ENCODE measurements at regions of chr2 and their contacts with region 1.

Region 1: DNA sequence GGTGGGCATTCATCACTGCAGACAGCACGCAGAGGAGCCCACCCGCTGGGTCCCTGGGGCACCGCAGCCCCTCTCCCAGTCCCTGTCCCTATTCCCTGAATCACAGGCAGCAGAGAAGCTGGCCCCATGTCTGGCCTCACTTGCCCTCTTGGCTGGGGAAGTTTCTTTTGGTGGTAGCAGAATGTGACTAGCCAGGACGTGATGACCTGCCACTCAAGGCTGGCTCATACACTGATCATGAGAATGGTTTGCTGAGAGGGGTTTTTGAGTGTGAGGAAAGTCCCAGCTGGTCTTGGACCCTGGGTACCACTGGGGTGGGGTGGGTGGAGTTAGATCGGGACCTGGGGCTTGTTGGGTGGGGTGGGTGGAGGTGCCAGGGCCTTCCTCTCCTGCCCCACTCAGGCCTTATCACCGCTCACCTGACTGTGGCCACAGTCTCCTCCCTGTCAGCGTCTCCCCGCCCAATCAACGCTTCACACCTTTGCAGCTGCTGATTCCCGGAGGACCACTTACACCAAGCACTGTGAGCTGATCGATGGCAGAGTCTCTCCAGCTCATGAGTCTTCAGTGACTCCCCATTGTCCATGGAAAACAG is 28.9 kb upstream of the FOSL2 start:
- DNase-seq: no peak
- ATAC-seq: no peak
- H3K4me3 ChIP-seq: no peak overlapping the region
- H3K27ac ChIP-seq: no peak overlapping the region
- H3K4me1 ChIP-seq: peaks cover 7% of the 10 kb centered on the region; the same call in 1 of the 2 replicates
- H3K27me3 ChIP-seq: no peaks in the 10 kb centered on the region; the same call in 1 of the 2 replicates
- CTCF ChIP-seq: no peak
- POLR2A ChIP-seq: no peak
- RAD21 ChIP-seq: no peak

Region 2: DNA sequence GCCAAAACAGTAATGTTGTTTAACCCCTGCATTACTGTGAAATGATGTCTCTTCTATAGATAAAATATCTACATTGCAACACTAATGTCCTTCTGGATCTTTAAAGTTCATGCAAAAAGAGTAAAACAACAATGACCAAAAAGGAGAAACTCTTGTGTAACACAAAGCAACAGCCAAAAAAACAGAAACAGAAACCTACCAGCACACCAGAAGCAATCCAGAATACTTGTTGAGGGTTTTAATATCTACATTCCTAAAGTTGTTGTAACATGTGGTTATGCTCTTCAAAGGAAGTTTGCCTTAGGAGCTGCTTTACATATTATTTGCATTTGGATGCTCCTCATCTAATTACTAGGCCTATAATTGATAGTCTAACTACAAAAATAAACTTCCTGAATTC is 316.1 kb before region 1 on chr2:
- CTCF ChIA-PET with region 1: no interaction called
- POLR2A ChIA-PET with region 1: interaction called, 10 read pairs
- dilution Hi-C with region 1: no loop called
- in situ Hi-C with region 1: no loop called
- intact Hi-C with region 1: no loop called
- DNase-seq: peak; percentile 81
- ATAC-seq: peak; percentile 63
- H3K4me3 ChIP-seq: no peak overlapping the region
- H3K27ac ChIP-seq: peak overlapping the region; percentile 42; the same call in 1 of the 2 replicates
- H3K4me1 ChIP-seq: peaks cover 10% of the 10 kb centered on the region
- H3K27me3 ChIP-seq: no peaks in the 10 kb centered on the region
- CTCF ChIP-seq: no peak
- POLR2A ChIP-seq: no peak
- RAD21 ChIP-seq: no peak

Region 3: GRCh38 chr2:28346587-28346986 is 17.2 kb before region 1 on chr2:
- CTCF ChIA-PET with region 1: no interaction called
- POLR2A ChIA-PET with region 1: no interaction called
- dilution Hi-C with region 1: no loop called
- in situ Hi-C with region 1: no loop called
- intact Hi-C with region 1: no loop called
- DNase-seq: peak; percentile 89
- ATAC-seq: peak; percentile 92
- H3K4me3 ChIP-seq: no peak overlapping the region
- H3K27ac ChIP-seq: peak overlapping the region; percentile 27; the same call in 1 of the 2 replicates
- H3K4me1 ChIP-seq: peaks cover 19% of the 10 kb centered on the region
- H3K27me3 ChIP-seq: no peaks in the 10 kb centered on the region
- CTCF ChIP-seq: no peak
- POLR2A ChIP-seq: no peak
- RAD21 ChIP-seq: no peak

Region 4: GRCh38 chr2:28552045-28552823 is 188.5 kb after region 1 on chr2:
- CTCF ChIA-PET with region 1: no interaction called
- POLR2A ChIA-PET with region 1: no interaction called
- dilution Hi-C with region 1: no loop called
- in situ Hi-C with region 1: no loop called
- intact Hi-C with region 1: no loop called
- DNase-seq: peak; percentile 72
- ATAC-seq: peak; percentile 53
- H3K4me3 ChIP-seq: no peak overlapping the region
- H3K27ac ChIP-seq: no peak overlapping the region
- H3K4me1 ChIP-seq: no peaks in the 10 kb centered on the region
- H3K27me3 ChIP-seq: peaks cover 10% of the 10 kb centered on the region
- CTCF ChIP-seq: no peak
- POLR2A ChIP-seq: no peak
- RAD21 ChIP-seq: no peak

Measured in IMR-90 (cell line).